ENCODE measurements at regions of chr3 and their contacts with region 1.

Region 1: DNA sequence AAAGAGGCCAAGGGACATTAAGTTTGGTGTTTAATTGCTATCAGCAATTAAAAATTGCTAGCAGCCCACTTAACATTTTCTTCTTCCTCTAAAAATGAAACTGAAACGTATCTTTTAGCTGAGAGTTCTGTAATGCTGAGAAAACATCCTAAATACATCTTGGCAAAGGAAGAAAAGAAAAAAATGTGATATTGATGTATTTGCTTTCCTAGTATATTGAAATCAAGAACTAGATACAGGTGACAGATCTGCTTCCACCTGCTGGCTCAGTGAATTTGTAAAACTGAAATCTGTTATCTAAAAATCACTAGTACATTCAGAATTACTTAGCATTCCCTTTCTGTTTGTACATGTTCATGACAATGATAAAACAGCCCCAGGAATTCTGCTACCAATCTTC is 283.2 kb downstream of the ZBTB20 start:
- DNase-seq: no peak
- ATAC-seq: no peak
- H3K4me3 Mint-ChIP-seq: peak overlapping the region; percentile 55
- H3K27ac Mint-ChIP-seq: no peak overlapping the region
- H3K4me1 Mint-ChIP-seq: peaks cover 22% of the 10 kb centered on the region
- H3K27me3 Mint-ChIP-seq: no peaks in the 10 kb centered on the region
- CTCF ChIP-seq: no peak

Region 2: GRCh38 chr3:114879059-114880031 is 15.5 kb after region 1 on chr3:
- CTCF ChIA-PET with region 1: no interaction called
- POLR2A ChIA-PET with region 1: no interaction called
- intact Hi-C with region 1: loop called (anchors 2 kb)
- DNase-seq: no peak
- ATAC-seq: no peak
- H3K4me3 Mint-ChIP-seq: no peak overlapping the region
- H3K27ac Mint-ChIP-seq: no peak overlapping the region
- H3K4me1 Mint-ChIP-seq: peaks cover 8% of the 10 kb centered on the region
- H3K27me3 Mint-ChIP-seq: no peaks in the 10 kb centered on the region
- CTCF ChIP-seq: no peak

Measured in activated B cell treated with CpG ODN at 0.5 μM for 24 hours (primary cell).